ENCODE measurements at regions of chr1 and their contacts with region 1.

Region 1: GRCh38 chr1:74356493-74356892 is 121.3 kb downstream of the TNNI3K start:
- DNase-seq: peak; percentile 93
- ATAC-seq: peak; percentile 96
- H3K4me3 ChIP-seq: no peak overlapping the region
- H3K27ac ChIP-seq: peak overlapping the region; percentile 70
- H3K4me1 ChIP-seq: peaks cover 32% of the 10 kb centered on the region
- H3K27me3 ChIP-seq: no peaks in the 10 kb centered on the region
- CTCF ChIP-seq: no peak

Region 2: GRCh38 chr1:74197657-74198552 is 158.6 kb before region 1 on chr1 and contains the starts of genes FPGT and LRRIQ3:
- CTCF ChIA-PET with region 1: no interaction called
- POLR2A ChIA-PET with region 1: no interaction called
- intact Hi-C with region 1: loop called (anchors 10 kb)
- DNase-seq: peak; percentile 93
- ATAC-seq: peak; percentile 95
- H3K4me3 ChIP-seq: peak within 1 kb of the TSS; percentile 80
- H3K27ac ChIP-seq: peak within 1 kb of the TSS; percentile 7
- H3K4me1 ChIP-seq: peaks cover 12% of the 10 kb centered on the region; the same call in 1 of the 2 replicates
- H3K27me3 ChIP-seq: no peaks in the 10 kb centered on the region
- CTCF ChIP-seq: no peak
- total RNA-seq, gene FPGT: 4.6 and 7.3 TPM in 2 replicates
- total RNA-seq, gene LRRIQ3: 0.23 and 0.95 TPM in 2 replicates

Region 3: GRCh38 chr1:74222709-74223108 is 133.8 kb before region 1 on chr1:
- CTCF ChIA-PET with region 1: no interaction called
- POLR2A ChIA-PET with region 1: no interaction called
- intact Hi-C with region 1: loop called (anchors 5 kb)
- DNase-seq: peak; percentile 77
- ATAC-seq: peak; percentile 100
- H3K4me3 ChIP-seq: no peak overlapping the region
- H3K27ac ChIP-seq: no peak overlapping the region
- H3K4me1 ChIP-seq: peaks cover 14% of the 10 kb centered on the region
- H3K27me3 ChIP-seq: peaks cover 16% of the 10 kb centered on the region; the same call in 1 of the 2 replicates
- CTCF ChIP-seq: no peak

Region 4: DNA sequence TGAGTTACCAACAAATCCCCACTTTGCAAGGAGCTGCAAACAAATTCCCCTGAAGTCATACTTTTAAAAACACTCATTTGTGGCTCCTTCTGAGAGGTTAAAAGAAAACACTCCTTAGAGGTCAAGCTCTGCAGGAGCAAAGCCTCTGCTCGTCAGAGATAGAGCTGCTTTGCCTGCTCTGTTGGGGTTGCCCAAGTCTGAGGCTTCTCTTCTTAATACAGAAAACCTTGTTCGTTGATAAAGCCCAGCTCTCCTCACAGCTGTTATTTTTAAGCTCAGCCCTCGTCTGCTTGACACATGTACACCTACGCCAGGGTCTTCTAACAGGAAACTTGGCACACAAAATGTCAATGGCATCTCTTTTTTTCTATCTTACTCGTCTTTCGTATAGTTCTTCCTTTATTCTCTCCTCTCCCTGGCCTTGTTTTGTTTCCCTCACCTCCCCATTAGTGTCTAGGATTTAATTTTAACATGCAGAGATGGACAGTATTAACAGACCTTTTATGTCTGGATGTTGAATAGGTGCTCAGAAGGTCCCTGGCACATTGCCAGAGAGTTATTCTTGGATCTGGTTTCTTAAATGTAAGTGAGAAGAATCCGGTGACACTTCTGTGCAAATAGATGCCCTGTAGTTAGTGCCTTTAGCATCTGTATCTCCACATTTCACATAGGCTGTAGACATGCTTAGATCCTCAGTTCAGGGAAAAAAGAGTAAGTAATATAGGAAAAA is 69.9 kb after region 1 on chr1:
- CTCF ChIA-PET with region 1: no interaction called
- POLR2A ChIA-PET with region 1: no interaction called
- intact Hi-C with region 1: loop called (anchors 2 kb)
- DNase-seq: no peak
- ATAC-seq: no peak
- H3K4me3 ChIP-seq: no peak overlapping the region
- H3K27ac ChIP-seq: no peak overlapping the region
- H3K4me1 ChIP-seq: 0 out of 2 replicates have a peak, but pooled peaks cover 7% of the 10 kb centered on the region
- H3K27me3 ChIP-seq: peaks cover 14% of the 10 kb centered on the region
- CTCF ChIP-seq: no peak

Region 5: DNA sequence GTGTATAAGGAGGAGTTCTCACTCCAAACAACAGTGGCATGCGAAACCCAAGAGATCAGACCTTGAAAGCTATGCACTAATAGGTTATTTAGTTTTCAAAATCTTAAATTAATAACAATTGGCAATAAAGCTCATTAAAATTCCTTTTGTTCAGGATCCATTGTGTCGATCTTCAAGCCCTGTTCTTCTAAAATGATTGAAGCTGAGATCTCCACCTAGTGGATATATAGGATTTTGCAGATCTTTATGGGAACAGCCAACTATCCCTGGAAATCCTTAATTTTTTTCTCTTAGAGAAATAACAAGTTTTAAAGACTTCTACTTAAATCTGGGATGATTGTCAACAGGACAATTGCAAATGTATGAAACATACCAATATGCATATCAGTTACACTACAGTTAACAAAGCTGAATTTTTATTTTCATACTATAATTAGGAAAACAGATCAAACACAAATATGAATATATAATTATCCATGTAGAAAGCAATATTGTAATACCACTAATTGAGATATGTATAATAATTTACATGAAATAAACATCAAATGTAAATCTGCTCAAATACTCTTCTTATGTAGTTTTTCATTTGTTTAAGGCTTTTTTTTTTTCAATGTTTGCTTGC is 112.6 kb after region 1 on chr1:
- CTCF ChIA-PET with region 1: no interaction called
- POLR2A ChIA-PET with region 1: interaction called, 4 read pairs
- intact Hi-C with region 1: loop called (anchors 10 kb)
- DNase-seq: peak; percentile 76
- ATAC-seq: 0 out of 2 replicates have a peak, but pooled peaks have one; percentile 45
- H3K4me3 ChIP-seq: no peak overlapping the region
- H3K27ac ChIP-seq: no peak overlapping the region
- H3K4me1 ChIP-seq: peaks cover 5% of the 10 kb centered on the region; the same call in 1 of the 2 replicates
- H3K27me3 ChIP-seq: peaks cover 37% of the 10 kb centered on the region
- CTCF ChIP-seq: peak; percentile 82

Region 6: DNA sequence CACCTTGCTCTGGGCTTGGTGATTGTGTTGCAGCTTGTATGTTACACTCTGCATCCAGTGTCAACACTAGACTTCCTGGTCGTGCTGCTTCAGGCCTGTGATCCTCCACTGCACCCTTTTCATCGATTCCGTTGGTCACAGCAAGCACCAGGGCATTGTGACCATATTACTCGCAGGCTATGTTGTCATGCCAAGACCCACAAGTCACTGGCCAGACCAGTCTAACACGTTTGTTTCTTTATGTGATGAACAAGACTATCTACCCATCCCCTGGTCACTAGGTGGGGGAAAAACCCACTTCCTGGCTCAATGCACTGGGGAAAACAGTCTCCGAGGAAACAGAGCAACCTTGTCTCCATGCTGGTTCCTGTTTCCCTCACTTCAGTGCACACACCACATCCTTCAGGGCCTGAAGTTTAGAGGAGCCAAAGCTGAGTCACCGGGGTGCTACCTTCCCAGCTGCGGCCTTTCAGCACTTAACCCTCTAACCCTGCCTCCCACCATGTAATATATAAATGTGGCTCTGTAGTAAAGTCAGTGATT is 296.2 kb after region 1 on chr1:
- CTCF ChIA-PET with region 1: no interaction called
- POLR2A ChIA-PET with region 1: no interaction called
- intact Hi-C with region 1: loop called (anchors 10 kb)
- DNase-seq: peak; percentile 99
- ATAC-seq: peak; percentile 90
- H3K4me3 ChIP-seq: peak overlapping the region; percentile 18; the same call in 1 of the 2 replicates
- H3K27ac ChIP-seq: peak overlapping the region; percentile 96
- H3K4me1 ChIP-seq: peaks cover 46% of the 10 kb centered on the region
- H3K27me3 ChIP-seq: no peaks in the 10 kb centered on the region
- CTCF ChIP-seq: no peak

Region 7: DNA sequence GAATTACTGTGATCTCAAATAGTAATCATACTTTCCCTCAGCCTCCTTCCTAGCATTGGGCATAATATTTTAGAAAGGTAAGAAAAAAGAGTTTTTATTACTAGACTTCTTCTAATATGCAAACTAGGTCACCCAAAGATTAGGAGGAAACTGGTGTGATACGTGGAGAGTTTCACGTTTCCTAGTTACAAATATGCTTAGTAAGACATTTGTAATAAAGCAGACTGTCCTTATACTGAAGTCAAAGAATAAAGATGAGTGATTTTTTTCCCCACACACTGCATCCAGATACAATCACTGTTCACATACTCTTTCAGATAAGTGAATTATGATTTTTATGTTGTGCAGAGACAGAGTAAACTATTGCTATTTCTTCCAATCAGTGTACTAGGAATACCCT is 795.6 kb after region 1 on chr1:
- CTCF ChIA-PET with region 1: no interaction called
- POLR2A ChIA-PET with region 1: interaction called, 13 read pairs
- intact Hi-C with region 1: no loop called
- DNase-seq: no peak
- ATAC-seq: no peak
- H3K4me3 ChIP-seq: no peak overlapping the region
- H3K27ac ChIP-seq: no peak overlapping the region
- H3K4me1 ChIP-seq: no peaks in the 10 kb centered on the region
- H3K27me3 ChIP-seq: peaks cover 31% of the 10 kb centered on the region; the same call in 1 of the 2 replicates
- CTCF ChIP-seq: no peak

Measured in PC-3 (cell line).